ENCODE measurements at regions of chr4 and their contacts with region 1.

Region 1: GRCh38 chr4:185742766-185743165 is 69.2 kb downstream of the SORBS2 start:
- DNase-seq: peak; percentile 84
- H3K4me3 Mint-ChIP-seq: peak overlapping the region; percentile 35
- H3K27ac Mint-ChIP-seq: peak overlapping the region; percentile 19
- H3K4me1 Mint-ChIP-seq: peaks cover 40% of the 10 kb centered on the region
- H3K27me3 Mint-ChIP-seq: no peaks in the 10 kb centered on the region
- CTCF ChIP-seq: no peak

Region 2: DNA sequence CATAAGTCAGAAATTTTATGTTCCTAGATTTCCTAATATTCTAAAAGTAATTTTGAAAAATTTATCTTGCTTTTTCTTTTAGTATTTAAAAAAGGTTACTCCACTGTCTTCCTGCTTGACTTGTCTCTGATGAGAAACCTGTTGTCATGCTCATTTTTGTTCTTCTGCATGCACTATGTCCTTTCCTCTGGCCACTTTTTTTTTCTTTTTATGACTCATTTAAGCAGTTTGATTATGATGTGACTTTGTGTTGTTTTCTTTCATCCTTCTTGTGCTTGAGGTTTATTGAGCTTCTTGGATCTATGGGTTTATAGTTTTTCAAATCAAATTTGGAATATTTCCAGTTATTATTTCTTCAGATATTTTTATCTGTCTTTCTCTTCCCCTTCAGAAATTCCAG is 305.0 kb before region 1 on chr4:
- CTCF ChIA-PET with region 1: no interaction called
- POLR2A ChIA-PET with region 1: no interaction called
- intact Hi-C with region 1: no loop called
- DNase-seq: no peak
- H3K4me3 Mint-ChIP-seq: no peak overlapping the region
- H3K27ac Mint-ChIP-seq: no peak overlapping the region
- H3K4me1 Mint-ChIP-seq: no peaks in the 10 kb centered on the region
- H3K27me3 Mint-ChIP-seq: no peaks in the 10 kb centered on the region
- CTCF ChIP-seq: no peak

Region 3: GRCh38 chr4:185665655-185666054 is 77.1 kb before region 1 on chr4:
- CTCF ChIA-PET with region 1: no interaction called
- POLR2A ChIA-PET with region 1: no interaction called
- intact Hi-C with region 1: no loop called
- DNase-seq: no peak
- H3K4me3 Mint-ChIP-seq: no peak overlapping the region
- H3K27ac Mint-ChIP-seq: no peak overlapping the region
- H3K4me1 Mint-ChIP-seq: no peaks in the 10 kb centered on the region
- H3K27me3 Mint-ChIP-seq: no peaks in the 10 kb centered on the region
- CTCF ChIP-seq: no peak

Region 4: GRCh38 chr4:185708348-185708747 is 34.4 kb before region 1 on chr4:
- CTCF ChIA-PET with region 1: no interaction called
- POLR2A ChIA-PET with region 1: interaction called, 41 read pairs
- intact Hi-C with region 1: no loop called
- DNase-seq: peak; percentile 44
- H3K4me3 Mint-ChIP-seq: no peak overlapping the region
- H3K27ac Mint-ChIP-seq: peak overlapping the region; percentile 88
- H3K4me1 Mint-ChIP-seq: peaks cover 50% of the 10 kb centered on the region
- H3K27me3 Mint-ChIP-seq: no peaks in the 10 kb centered on the region
- CTCF ChIP-seq: no peak

Region 5: DNA sequence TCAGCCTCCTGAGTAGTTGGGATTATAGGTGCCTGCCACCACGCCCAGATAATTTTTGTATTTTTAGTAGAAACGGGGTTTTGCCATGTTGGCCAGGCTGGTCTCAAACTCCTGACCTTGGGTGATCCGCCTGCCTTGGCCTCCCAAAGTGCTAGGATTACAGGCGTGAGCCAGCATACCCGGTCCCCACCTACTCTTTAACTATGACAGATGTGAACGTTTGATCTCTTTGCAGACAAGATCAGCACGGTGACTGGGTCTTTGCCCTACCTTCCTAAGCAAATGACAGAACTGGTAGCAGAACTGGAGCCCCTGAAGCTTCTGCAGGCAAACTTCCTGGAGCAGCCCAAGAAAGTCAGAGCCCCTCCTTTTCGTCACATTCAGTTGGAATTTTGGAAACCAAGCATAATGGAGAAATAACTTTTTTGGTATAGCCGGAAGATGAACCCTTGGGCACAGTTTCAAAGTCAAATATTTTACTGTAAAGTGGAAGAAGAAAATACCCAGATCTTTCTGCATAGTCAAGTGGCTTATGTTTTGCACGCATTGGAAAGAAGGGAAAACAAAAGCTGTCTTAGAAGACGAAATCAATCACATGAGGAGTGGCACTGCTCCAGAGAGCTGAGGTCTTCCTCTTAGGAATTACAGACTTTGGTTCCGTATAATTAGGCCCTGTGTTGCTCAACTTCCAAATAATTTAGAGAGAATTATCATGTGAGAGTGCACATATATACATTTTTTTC is 21.4 kb before region 1 on chr4:
- CTCF ChIA-PET with region 1: interaction called, 3 read pairs
- POLR2A ChIA-PET with region 1: interaction called, 16 read pairs
- intact Hi-C with region 1: no loop called
- DNase-seq: peak; percentile 58
- H3K4me3 Mint-ChIP-seq: peak overlapping the region; percentile 46
- H3K27ac Mint-ChIP-seq: peak overlapping the region; percentile 87
- H3K4me1 Mint-ChIP-seq: peaks cover 32% of the 10 kb centered on the region
- H3K27me3 Mint-ChIP-seq: no peaks in the 10 kb centered on the region
- CTCF ChIP-seq: no peak

Region 6: GRCh38 chr4:185730387-185730786 is 12.4 kb before region 1 on chr4:
- CTCF ChIA-PET with region 1: no interaction called
- POLR2A ChIA-PET with region 1: interaction called, 12 read pairs
- intact Hi-C with region 1: no loop called
- DNase-seq: peak; percentile 76
- H3K4me3 Mint-ChIP-seq: peak overlapping the region; percentile 35
- H3K27ac Mint-ChIP-seq: peak overlapping the region; percentile 85
- H3K4me1 Mint-ChIP-seq: peaks cover 30% of the 10 kb centered on the region
- H3K27me3 Mint-ChIP-seq: no peaks in the 10 kb centered on the region
- CTCF ChIP-seq: no peak

Region 7: DNA sequence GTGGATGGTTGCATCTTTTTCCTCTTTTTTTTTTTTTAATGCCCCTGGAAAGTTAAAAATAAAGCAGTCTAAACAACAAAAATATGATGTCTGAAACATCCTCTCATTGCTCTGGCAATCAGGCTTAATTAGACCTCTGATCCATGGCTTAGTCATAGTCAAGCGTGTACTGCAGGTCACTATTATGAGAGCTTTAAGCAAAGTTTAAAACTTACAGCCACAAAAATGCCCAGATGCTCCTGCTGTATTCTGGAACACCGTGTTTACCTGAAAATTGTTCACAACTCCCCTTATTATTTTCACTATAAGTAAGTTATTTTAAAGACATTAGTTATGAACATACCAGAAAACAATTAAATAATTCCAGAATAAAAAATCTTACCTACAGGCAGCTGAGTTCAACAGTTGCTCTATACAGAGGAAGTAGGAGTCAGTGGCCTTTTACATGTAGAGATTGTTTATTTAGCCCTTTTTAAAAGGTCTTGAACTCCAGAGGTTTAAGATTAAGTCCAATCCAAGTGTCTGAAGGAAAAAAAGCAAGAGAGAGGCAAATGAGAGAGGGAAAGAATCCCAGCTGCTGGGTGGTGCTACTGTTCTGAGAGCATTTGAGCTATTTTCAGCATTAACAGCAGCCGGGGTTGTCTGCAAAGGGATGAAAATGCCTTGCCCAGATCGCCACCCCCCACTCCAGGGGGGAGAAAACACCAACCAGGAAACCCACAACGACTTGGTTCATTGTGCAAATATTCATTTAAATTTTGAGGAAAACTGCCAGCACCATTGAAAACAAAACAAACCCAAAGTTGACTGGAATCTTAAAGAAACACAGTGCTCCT is 32.3 kb after region 1 on chr4:
- CTCF ChIA-PET with region 1: no interaction called
- POLR2A ChIA-PET with region 1: interaction called, 6 read pairs
- intact Hi-C with region 1: loop called (anchors 5 kb)
- DNase-seq: peak; percentile 70
- H3K4me3 Mint-ChIP-seq: peak overlapping the region; percentile 60
- H3K27ac Mint-ChIP-seq: peak overlapping the region; percentile 92
- H3K4me1 Mint-ChIP-seq: peaks cover 41% of the 10 kb centered on the region
- H3K27me3 Mint-ChIP-seq: no peaks in the 10 kb centered on the region
- CTCF ChIP-seq: no peak

Region 8: DNA sequence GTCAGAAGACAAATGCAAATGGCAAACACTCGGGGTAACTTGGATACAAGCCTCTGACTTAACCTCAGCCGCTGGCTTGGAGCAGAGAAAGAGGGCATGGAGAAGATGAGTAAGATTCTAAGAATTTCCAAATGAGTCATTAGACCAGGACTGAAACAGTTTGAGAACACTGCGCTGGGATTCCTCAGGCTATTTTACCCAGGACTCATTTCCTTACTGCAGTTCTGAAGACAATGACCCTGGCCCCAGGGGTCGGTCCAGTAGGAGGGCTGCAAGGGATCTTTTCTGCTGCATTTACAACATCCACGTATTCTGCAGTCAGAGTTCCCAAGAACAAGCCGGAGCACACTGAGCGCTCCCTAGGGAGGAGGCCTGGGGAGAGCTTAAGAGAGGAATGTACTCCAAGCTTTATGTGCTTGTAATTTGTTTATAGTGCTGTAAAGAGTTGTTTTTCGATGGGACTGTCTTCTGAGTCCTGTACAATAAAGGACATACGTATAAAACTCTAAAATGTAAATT is 96.5 kb after region 1 on chr4:
- CTCF ChIA-PET with region 1: no interaction called
- POLR2A ChIA-PET with region 1: interaction called, 11 read pairs
- intact Hi-C with region 1: no loop called
- DNase-seq: peak; percentile 92
- H3K4me3 Mint-ChIP-seq: no peak overlapping the region
- H3K27ac Mint-ChIP-seq: no peak overlapping the region
- H3K4me1 Mint-ChIP-seq: no peaks in the 10 kb centered on the region
- H3K27me3 Mint-ChIP-seq: no peaks in the 10 kb centered on the region
- CTCF ChIP-seq: no peak

Region 9: GRCh38 chr4:185950891-185951290 is 208.1 kb after region 1 on chr4:
- CTCF ChIA-PET with region 1: no interaction called
- POLR2A ChIA-PET with region 1: no interaction called
- intact Hi-C with region 1: no loop called
- DNase-seq: peak; percentile 33
- H3K4me3 Mint-ChIP-seq: no peak overlapping the region
- H3K27ac Mint-ChIP-seq: no peak overlapping the region
- H3K4me1 Mint-ChIP-seq: peaks cover 10% of the 10 kb centered on the region
- H3K27me3 Mint-ChIP-seq: no peaks in the 10 kb centered on the region
- CTCF ChIP-seq: no peak

Region 10: GRCh38 chr4:186606593-186606992 is 863.8 kb after region 1 on chr4:
- CTCF ChIA-PET with region 1: no interaction called
- POLR2A ChIA-PET with region 1: no interaction called
- intact Hi-C with region 1: no loop called
- DNase-seq: peak; percentile 80
- H3K4me3 Mint-ChIP-seq: no peak overlapping the region
- H3K27ac Mint-ChIP-seq: peak overlapping the region; percentile 58
- H3K4me1 Mint-ChIP-seq: peaks cover 19% of the 10 kb centered on the region
- H3K27me3 Mint-ChIP-seq: no peaks in the 10 kb centered on the region
- CTCF ChIP-seq: no peak

Measured in MCF 10A (cell line).